B cell (primary cell): ENCODE measurements at regions of chr3 and their contacts with region 1.

Region 1: GRCh38 chr3:88203642-88204055 is 53.9 kb downstream of the C3orf38 start:
- DNase-seq: peak; percentile 62
- ATAC-seq: peak; percentile 62
- H3K4me3 ChIP-seq: no peak overlapping the region
- H3K4me3 Mint-ChIP-seq: no peak overlapping the region
- H3K27ac ChIP-seq: no peak overlapping the region
- H3K27ac Mint-ChIP-seq: no peak overlapping the region
- H3K4me1 ChIP-seq: no peaks in the 10 kb centered on the region
- H3K4me1 Mint-ChIP-seq: no peaks in the 10 kb centered on the region
- H3K27me3 ChIP-seq: no peaks in the 10 kb centered on the region
- H3K27me3 Mint-ChIP-seq: no peaks in the 10 kb centered on the region
- CTCF ChIP-seq: peak; percentile 92

Region 2: DNA sequence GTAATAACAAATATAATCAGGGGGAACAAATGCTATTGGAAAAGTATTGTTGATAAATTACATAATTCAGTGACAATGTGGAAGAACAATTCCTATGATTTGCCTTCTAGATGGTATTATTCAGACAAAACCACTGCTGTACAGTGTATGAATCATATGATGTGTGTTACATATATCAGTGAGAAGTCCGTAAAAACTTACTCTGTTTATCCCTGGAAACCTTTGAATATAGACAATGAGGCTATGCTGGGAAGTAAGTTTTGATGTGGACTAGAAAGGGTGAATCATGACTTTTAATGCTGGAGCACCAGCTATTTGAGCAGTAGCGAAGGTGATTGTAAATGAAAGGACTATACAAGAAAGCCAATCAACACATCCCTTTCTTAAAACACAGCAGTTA is 35.9 kb before region 1 on chr3:
- CTCF ChIA-PET with region 1: no interaction called
- POLR2A ChIA-PET with region 1: no interaction called
- intact Hi-C with region 1: no loop called
- DNase-seq: no peak
- ATAC-seq: no peak
- H3K4me3 ChIP-seq: no peak overlapping the region
- H3K4me3 Mint-ChIP-seq: no peak overlapping the region
- H3K27ac ChIP-seq: no peak overlapping the region
- H3K27ac Mint-ChIP-seq: no peak overlapping the region
- H3K4me1 ChIP-seq: no peaks in the 10 kb centered on the region
- H3K4me1 Mint-ChIP-seq: peaks cover 2% of the 10 kb centered on the region
- H3K27me3 ChIP-seq: no peaks in the 10 kb centered on the region
- H3K27me3 Mint-ChIP-seq: no peaks in the 10 kb centered on the region
- CTCF ChIP-seq: no peak

Region 3: GRCh38 chr3:88180398-88180999 is 23.1 kb before region 1 on chr3:
- CTCF ChIA-PET with region 1: no interaction called
- POLR2A ChIA-PET with region 1: no interaction called
- intact Hi-C with region 1: no loop called
- DNase-seq: peak; percentile 56
- ATAC-seq: no peak
- H3K4me3 ChIP-seq: no peak overlapping the region
- H3K4me3 Mint-ChIP-seq: no peak overlapping the region
- H3K27ac ChIP-seq: no peak overlapping the region
- H3K27ac Mint-ChIP-seq: no peak overlapping the region
- H3K4me1 ChIP-seq: no peaks in the 10 kb centered on the region
- H3K4me1 Mint-ChIP-seq: no peaks in the 10 kb centered on the region
- H3K27me3 ChIP-seq: no peaks in the 10 kb centered on the region
- H3K27me3 Mint-ChIP-seq: no peaks in the 10 kb centered on the region
- CTCF ChIP-seq: peak; percentile 68

Region 4: GRCh38 chr3:89098964-89099585 is 895.4 kb after region 1 on chr3:
- CTCF ChIA-PET with region 1: interaction called, 3 read pairs
- POLR2A ChIA-PET with region 1: no interaction called
- intact Hi-C with region 1: loop called (anchors 1 kb)
- DNase-seq: peak; percentile 68
- ATAC-seq: peak; percentile 87
- H3K4me3 ChIP-seq: no peak overlapping the region
- H3K4me3 Mint-ChIP-seq: no peak overlapping the region
- H3K27ac ChIP-seq: no peak overlapping the region
- H3K27ac Mint-ChIP-seq: no peak overlapping the region
- H3K4me1 ChIP-seq: no peaks in the 10 kb centered on the region
- H3K4me1 Mint-ChIP-seq: no peaks in the 10 kb centered on the region
- H3K27me3 ChIP-seq: no peaks in the 10 kb centered on the region
- H3K27me3 Mint-ChIP-seq: peaks cover 6% of the 10 kb centered on the region
- CTCF ChIP-seq: peak; percentile 99

Region 5: GRCh38 chr3:90184861-90185260 is 1981.2 kb after region 1 on chr3:
- CTCF ChIA-PET with region 1: interaction called, 4 read pairs
- POLR2A ChIA-PET with region 1: no interaction called
- intact Hi-C with region 1: loop called (anchors 5 kb)
- DNase-seq: no peak
- ATAC-seq: no peak
- H3K4me3 ChIP-seq: no peak overlapping the region
- H3K4me3 Mint-ChIP-seq: no peak overlapping the region
- H3K27ac ChIP-seq: no peak overlapping the region
- H3K27ac Mint-ChIP-seq: no peak overlapping the region
- H3K4me1 ChIP-seq: no peaks in the 10 kb centered on the region
- H3K4me1 Mint-ChIP-seq: no peaks in the 10 kb centered on the region
- H3K27me3 ChIP-seq: no peaks in the 10 kb centered on the region
- H3K27me3 Mint-ChIP-seq: no peaks in the 10 kb centered on the region
- CTCF ChIP-seq: no peak